ENCODE measurements at regions of chr20 and their contacts with region 1.

Region 1: GRCh38 chr20:35994994-35995453 is 26.6 kb downstream of the CNBD2 start:
- DNase-seq: no peak
- H3K4me3 ChIP-seq: no peak overlapping the region
- H3K27me3 ChIP-seq: no peaks in the 10 kb centered on the region
- CTCF ChIP-seq: peak; percentile 98

Region 2: DNA sequence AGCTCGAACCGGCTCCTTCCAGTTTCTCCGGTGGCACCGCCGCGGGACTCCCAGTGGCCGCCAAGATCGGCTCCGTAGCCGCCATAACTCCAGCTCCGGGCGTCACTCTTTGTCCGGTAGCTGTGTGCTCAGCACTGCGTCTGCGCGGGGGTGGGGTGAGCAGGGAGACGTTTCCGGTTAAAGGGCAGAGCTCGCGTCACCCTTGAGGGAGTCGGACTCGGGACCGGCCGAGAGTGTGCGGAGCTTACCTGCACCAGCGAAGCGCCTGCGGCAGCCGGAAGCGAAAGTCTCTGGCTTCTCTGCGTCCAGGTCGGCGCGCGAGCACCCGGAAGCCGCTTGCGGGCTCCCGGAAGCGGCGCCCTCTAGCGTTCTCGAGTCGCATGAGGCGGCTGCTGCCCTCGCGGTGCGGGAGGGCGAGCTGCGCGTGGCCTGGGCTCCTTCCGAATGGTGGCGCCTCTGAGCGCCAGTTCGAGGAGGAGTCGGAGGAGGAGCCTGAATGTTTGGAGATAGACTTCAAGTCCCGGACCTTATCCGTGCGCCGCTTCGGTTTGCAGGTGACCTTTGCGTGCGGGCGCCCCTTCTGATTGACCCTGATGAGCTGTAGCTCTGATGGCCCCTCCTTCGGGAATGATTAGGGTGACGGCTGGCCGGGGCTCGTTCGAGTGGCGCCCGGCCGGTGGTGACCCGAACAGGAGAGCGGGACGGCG is 40.7 kb before region 1 on chr20 and contains the start of gene SCAND1:
- CTCF ChIA-PET with region 1: interaction called, 10 read pairs
- POLR2A ChIA-PET with region 1: no interaction called
- DNase-seq: peak; percentile 84
- H3K4me3 ChIP-seq: peak within 1 kb of the TSS; percentile 98
- H3K27me3 ChIP-seq: no peaks in the 10 kb centered on the region
- CTCF ChIP-seq: peak; percentile 98
- polyA plus RNA-seq, gene SCAND1: 10.8 and 15.8 TPM in 2 replicates

Region 3: DNA sequence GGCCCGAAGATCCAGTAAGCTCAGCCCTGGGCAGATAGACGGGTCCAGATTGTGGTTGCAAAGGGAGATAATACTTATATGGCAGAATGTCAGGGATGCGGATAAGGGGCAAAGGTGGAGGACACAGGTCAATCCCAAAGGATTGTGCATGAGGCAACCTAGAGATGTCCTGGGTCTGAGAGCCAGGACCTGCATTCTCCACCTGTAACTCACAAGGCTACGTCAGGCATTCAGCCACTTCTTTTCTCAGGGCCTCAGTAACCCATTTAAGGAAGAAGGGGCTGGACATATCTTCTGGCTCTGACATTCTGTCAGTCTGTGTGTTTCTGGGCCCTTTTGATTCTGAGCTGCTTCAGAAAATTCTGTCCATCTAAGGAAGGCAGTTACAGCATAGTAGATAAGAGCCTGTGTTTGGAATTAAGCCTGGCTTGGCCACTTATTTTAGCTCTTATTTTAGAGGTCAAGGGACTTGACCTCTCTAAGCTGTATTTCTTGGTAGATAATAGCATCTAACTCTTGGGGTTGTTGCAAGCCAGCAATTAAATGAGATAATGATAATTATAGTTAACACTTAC is 13.5 kb after region 1 on chr20:
- CTCF ChIA-PET with region 1: interaction called, 11 read pairs
- POLR2A ChIA-PET with region 1: no interaction called
- DNase-seq: no peak
- H3K4me3 ChIP-seq: no peak overlapping the region
- H3K27me3 ChIP-seq: no peaks in the 10 kb centered on the region
- CTCF ChIP-seq: no peak

Region 4: DNA sequence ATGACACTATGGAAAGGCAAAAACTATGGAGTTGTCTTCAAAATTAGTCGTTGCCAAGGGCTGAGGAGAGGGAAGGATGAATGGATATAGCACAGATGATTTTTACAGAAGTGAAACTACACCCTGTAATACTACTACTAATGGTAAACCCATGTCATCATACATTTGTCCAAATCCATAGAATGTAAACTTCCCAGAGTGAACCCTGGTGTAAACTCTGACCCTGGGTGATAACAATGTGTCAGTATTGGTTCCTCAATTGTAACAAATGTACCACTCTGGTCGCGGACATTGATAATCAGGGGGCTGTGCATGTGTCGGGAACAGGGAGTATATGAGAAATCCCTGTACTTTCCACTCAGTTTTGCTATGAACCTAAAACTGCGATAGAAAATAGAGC is 45.5 kb after region 1 on chr20:
- CTCF ChIA-PET with region 1: interaction called, 10 read pairs
- POLR2A ChIA-PET with region 1: no interaction called
- DNase-seq: no peak
- H3K4me3 ChIP-seq: no peak overlapping the region
- H3K27me3 ChIP-seq: no peaks in the 10 kb centered on the region
- CTCF ChIP-seq: no peak

Region 5: DNA sequence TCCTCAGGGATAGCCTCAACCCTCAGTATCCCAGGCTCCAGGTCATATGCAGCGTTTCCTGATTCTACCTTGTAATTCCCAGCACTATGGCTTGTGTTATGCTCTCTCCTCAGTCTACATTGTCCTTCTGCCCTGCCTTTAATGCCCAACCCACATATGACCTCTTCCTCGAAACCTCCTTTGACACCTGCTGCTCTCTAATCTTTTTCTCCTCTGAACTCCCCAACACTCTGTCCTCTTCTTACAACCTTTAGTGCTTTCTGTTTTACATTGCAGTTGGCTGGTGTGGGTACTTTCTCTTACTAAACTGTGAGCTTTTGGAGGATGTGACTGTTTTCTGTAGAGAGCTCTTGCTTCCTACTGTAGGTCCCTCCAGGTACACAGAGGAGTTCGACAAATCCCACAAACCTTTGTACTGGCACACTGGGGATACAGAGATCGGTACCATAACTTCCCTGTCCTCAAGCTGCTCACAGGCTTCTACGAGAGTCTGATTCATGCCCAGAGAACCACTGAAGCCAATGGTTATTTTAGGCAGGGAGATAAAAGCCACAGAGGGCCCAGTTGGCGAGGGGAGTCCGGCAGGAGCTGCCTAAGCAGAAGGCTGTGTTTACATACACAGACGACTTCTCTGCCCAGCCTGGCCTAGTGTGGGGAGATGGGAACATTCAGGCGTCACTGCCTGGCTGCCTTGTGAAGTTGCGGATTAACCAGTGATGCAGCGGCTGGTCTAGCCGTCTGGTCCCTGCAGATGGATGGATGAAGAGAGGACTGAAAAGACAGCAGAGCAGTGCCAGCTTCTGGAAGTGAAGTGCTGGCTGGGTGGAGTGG is 151.1 kb after region 1 on chr20:
- CTCF ChIA-PET with region 1: interaction called, 498 read pairs
- POLR2A ChIA-PET with region 1: no interaction called
- DNase-seq: no peak
- H3K4me3 ChIP-seq: no peak overlapping the region
- H3K27me3 ChIP-seq: peaks cover 5% of the 10 kb centered on the region
- CTCF ChIP-seq: no peak

Region 6: GRCh38 chr20:36199345-36200257 is 204.6 kb after region 1 on chr20:
- CTCF ChIA-PET with region 1: interaction called, 31 read pairs
- POLR2A ChIA-PET with region 1: no interaction called
- DNase-seq: peak; percentile 14
- H3K4me3 ChIP-seq: no peak overlapping the region
- H3K27me3 ChIP-seq: no peaks in the 10 kb centered on the region
- CTCF ChIP-seq: peak; percentile 97

Measured in BJ (cell line).